Transverse colon (tissue), 4 donors: ENCODE measurements at regions of chr7 and their contacts with region 1.

Region 1: GRCh38 chr7:100200693-100201092 is 19.1 kb upstream of the PVRIG start:
- DNase-seq: peak; percentile 58
- H3K4me3 ChIP-seq: no peak overlapping the region
- H3K27ac ChIP-seq: no peak overlapping the region
- H3K4me1 ChIP-seq: peaks cover 0 to 16% (median 4%) of the 10 kb centered on the region in 4 donors
- H3K27me3 ChIP-seq: no peaks in the 10 kb centered on the region
- CTCF ChIP-seq: no peak
- EP300 ChIP-seq: no peak
- POLR2A ChIP-seq: no peak

Region 2: DNA sequence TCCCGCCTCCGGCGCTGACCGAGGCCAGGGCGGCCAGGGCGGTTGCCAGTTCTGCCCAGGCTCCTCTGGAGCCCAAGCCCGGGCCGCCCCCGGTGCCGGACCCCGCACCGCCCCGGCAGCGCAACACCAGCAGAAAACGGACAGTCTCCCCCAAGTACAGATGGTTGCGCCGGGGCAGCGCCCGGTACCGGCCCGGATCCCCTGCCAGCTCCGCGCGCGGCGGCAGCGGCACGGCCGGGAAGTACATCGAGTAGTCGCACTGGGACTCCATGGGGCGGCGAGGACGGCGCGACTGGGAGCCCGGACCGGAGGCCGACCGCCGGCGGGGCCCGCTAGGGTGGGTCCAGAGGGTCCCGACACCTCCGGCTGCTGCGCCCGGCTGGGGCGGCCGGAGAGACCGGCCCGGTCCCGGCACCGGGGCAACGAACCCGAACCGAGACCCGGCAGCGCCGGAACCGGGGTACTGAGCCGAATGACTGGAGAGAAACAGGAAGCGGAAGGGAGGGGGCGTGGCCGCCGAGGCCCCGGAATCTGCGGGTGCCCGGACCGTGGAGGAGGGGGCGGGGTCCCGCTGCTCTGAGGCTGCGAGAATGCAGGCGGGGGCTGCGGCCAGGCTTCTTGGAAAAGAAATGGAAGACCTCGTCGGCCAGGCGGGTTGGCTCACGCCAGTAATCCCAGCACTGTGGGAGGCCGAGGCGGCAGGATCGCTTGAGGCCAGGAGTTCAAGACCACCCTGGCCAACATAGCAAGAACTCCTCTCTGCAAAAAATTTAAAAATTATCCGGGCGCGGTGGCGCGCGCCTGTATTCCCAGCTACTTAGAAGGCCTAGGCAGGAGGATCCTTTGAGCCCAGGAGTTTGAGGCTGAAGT is 42.2 kb before region 1 on chr7 and contains the start of gene TRAPPC14:
- in situ Hi-C with region 1: no loop called
- intact Hi-C with region 1: loop called (anchors 1 kb)
- DNase-seq: peak; percentile 95
- H3K4me3 ChIP-seq: peak within 1 kb of the TSS; percentile 36 to 92 (median 74)
- H3K27ac ChIP-seq: peak within 1 kb of the TSS; percentile 79 to 91 (median 90)
- H3K4me1 ChIP-seq: peaks cover 20 to 62% (median 49%) of the 10 kb centered on the region in 4 donors
- H3K27me3 ChIP-seq: no peaks in the 10 kb centered on the region
- CTCF ChIP-seq: peak in 1 of 5 experiments; percentile 15
- EP300 ChIP-seq: no peak
- POLR2A ChIP-seq: peak; percentile 71
- total RNA-seq, gene TRAPPC14: 43.5 to 111 (median 51.2) TPM